ENCODE measurements at regions of chr17 and their contacts with region 1.

Region 1: GRCh38 chr17:29252101-29252866 is 5.6 kb downstream of the CRYBA1 start:
- DNase-seq: no peak
- H3K4me3 Mint-ChIP-seq: no peak overlapping the region
- H3K27ac Mint-ChIP-seq: no peak overlapping the region
- H3K4me1 Mint-ChIP-seq: peaks cover 14% of the 10 kb centered on the region
- H3K27me3 Mint-ChIP-seq: no peaks in the 10 kb centered on the region
- CTCF ChIP-seq: peak; percentile 2

Region 2: DNA sequence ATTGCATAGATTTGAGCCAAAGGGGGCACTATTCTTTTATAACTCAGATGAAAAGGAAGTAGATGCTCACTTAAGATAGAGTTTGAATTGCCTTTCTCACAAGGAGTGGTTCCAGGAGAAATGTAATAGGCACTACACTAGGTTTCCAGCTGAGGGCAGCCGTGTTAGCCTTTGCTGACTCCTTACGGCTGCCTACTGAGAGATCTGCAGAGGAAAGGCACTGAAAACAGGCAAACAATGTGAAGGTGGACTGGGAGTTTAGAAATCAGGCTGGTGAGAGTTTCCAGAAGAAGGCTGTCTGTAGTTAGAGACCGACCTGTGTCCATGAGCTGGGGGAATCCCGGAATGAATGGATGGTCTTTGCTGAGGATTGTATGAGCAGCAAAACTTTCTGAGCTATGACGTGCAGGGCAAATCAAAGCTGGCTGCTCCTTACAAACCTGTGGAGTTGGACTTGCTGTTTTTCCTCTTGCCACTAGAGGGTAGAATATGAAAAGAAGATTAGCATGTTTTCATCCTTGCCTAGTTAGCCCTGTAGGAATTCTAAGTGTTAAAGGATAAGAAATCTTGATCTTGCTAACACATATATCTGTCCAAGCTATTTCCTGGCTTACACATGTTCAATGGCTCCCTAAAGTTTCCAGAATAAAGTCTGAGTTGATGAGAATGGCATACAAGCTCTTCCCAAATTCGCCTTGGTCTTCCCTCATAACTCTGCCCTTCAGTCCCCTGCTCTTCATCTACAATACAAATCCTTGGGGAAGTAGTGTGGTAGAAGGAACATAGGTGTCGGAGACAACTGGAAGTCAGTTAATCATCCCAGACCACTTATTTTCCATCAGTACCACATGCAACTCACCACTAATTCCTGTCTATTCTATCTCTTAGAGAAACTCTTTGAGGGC is 117.8 kb after region 1 on chr17:
- CTCF ChIA-PET with region 1: interaction called, 16 read pairs
- intact Hi-C with region 1: no loop called
- DNase-seq: peak; percentile 55
- H3K4me3 Mint-ChIP-seq: no peak overlapping the region
- H3K27ac Mint-ChIP-seq: no peak overlapping the region
- H3K4me1 Mint-ChIP-seq: peaks cover 6% of the 10 kb centered on the region
- H3K27me3 Mint-ChIP-seq: no peaks in the 10 kb centered on the region
- CTCF ChIP-seq: peak; percentile 58

Measured in Calu3 (cell line).